T-cell (primary cell): ENCODE measurements at regions of chr19 and their contacts with region 1.

Region 1: DNA sequence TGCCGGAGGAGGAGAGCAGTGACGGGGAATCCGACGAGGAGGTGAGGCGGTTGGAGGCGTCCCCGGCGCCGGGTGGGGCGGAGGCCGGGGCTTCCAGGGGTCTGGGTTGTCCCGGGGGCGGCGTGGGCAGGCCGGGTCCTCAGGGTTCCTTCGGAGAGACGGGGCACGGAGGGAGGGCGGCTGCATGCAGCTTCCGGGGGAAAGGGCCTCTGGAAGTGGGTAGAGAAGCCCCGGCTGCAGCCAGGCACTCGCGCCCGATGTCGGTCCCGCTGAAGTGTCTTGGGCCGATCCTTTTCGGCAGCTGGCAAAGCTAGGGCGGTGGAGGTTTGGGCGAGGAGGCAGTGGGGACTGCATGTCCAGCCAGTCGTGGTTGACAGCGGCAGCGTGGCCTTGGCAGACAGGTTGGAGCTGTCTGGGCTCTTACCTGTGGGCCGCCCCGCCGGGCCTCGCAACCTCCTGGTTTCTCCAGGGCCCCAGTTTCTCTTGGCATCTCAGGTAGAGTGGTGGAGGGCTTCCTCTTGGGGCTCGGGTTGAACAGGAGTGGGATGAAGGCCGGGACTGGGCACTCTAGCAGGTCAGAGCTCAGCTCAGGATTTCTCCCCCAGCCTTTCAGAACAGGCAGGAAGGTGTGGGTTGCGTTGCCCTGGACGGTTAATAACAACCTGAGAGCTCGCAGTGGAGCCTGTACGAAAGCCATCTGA is 688 bp downstream of the KMT2B start:
- DNase-seq: peak in 25 of 35 experiments; percentile 12 to 56 (median 34)
- ATAC-seq: peak in 3 of 4 experiments; percentile 2 to 5 (median 3)
- H3K4me3 ChIP-seq: peak overlapping the region; percentile 70 to 74
- H3K4me3 Mint-ChIP-seq: peak overlapping the region; percentile 84 to 87 (median 84)
- H3K27ac ChIP-seq: peak overlapping the region; percentile 16
- H3K27ac Mint-ChIP-seq: peak overlapping the region; percentile 68 to 79
- H3K4me1 ChIP-seq: peaks cover 11 to 58% of the 10 kb centered on the region in 2 experiments
- H3K4me1 Mint-ChIP-seq: peaks cover 49 to 59% (median 54%) of the 10 kb centered on the region in 3 donors
- H3K27me3 ChIP-seq: no peaks in the 10 kb centered on the region
- H3K27me3 Mint-ChIP-seq: no peaks in the 10 kb centered on the region

Region 2: GRCh38 chr19:35693830-35694599 is 24.5 kb before region 1 on chr19:
- CTCF ChIA-PET with region 1: interaction called in 1 of 2 experiments, 3 read pairs
- POLR2A ChIA-PET with region 1: interaction called in 1 of 2 experiments, 11 read pairs
- DNase-seq: peak; percentile 75 to 96 (median 86)
- ATAC-seq: peak; percentile 100
- H3K4me3 ChIP-seq: no peak overlapping the region
- H3K4me3 Mint-ChIP-seq: no peak overlapping the region
- H3K27ac ChIP-seq: no peak overlapping the region
- H3K27ac Mint-ChIP-seq: no peak overlapping the region
- H3K4me1 ChIP-seq: no peaks in the 10 kb centered on the region
- H3K4me1 Mint-ChIP-seq: no peaks in the 10 kb centered on the region
- H3K27me3 ChIP-seq: peaks cover 0 to 3% of the 10 kb centered on the region in 2 experiments
- H3K27me3 Mint-ChIP-seq: no peaks in the 10 kb centered on the region

Region 3: GRCh38 chr19:35736913-35737886 is 18.7 kb after region 1 on chr19:
- CTCF ChIA-PET with region 1: no interaction called
- POLR2A ChIA-PET with region 1: no interaction called
- DNase-seq: peak in 5 of 35 experiments; percentile 27 to 52 (median 34)
- ATAC-seq: no peak
- H3K4me3 ChIP-seq: no peak overlapping the region
- H3K4me3 Mint-ChIP-seq: no peak overlapping the region
- H3K27ac ChIP-seq: no peak overlapping the region
- H3K27ac Mint-ChIP-seq: peak overlapping the region; percentile 68 to 78
- H3K4me1 ChIP-seq: peaks cover 0 to 45% of the 10 kb centered on the region in 2 experiments
- H3K4me1 Mint-ChIP-seq: peaks cover 35 to 52% (median 48%) of the 10 kb centered on the region in 3 donors
- H3K27me3 ChIP-seq: no peaks in the 10 kb centered on the region
- H3K27me3 Mint-ChIP-seq: no peaks in the 10 kb centered on the region

Region 4: GRCh38 chr19:35776111-35776788 is 57.8 kb after region 1 on chr19:
- CTCF ChIA-PET with region 1: no interaction called
- POLR2A ChIA-PET with region 1: no interaction called
- DNase-seq: no peak
- ATAC-seq: no peak
- H3K4me3 ChIP-seq: peak overlapping the region in 1 of 2 donors; percentile 62
- H3K4me3 Mint-ChIP-seq: peak overlapping the region; percentile 62 to 88 (median 72)
- H3K27ac ChIP-seq: no peak overlapping the region
- H3K27ac Mint-ChIP-seq: no peak overlapping the region
- H3K4me1 ChIP-seq: peaks cover 4 to 19% of the 10 kb centered on the region in 2 experiments
- H3K4me1 Mint-ChIP-seq: peaks cover 6 to 20% (median 20%) of the 10 kb centered on the region in 3 donors
- H3K27me3 ChIP-seq: no peaks in the 10 kb centered on the region
- H3K27me3 Mint-ChIP-seq: no peaks in the 10 kb centered on the region